ENCODE measurements at regions of chr1 and their contacts with region 1.

Region 1: DNA sequence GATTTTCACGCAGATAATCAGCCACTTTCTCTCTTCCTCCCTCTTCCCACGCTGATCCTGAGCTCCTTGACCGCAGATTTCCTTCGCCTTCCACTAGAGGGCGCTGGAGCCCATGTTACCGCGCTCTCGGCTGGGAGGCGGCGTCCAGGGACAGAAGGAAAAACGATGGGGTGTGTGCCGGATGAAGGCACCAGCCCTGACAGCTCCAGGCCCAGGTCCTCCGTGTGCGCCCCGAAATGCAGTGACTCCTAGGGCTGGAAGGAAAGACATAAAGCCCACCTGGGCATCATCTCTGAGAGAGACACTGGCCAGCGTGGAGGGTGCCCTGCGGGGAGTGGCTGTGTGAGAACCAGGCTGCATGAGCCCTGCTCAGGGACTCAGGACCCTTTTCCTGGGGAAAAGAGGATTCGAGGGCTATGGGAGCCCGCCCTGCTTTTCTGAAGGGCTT is 44.9 kb upstream of the CYP2J2 start:
- DNase-seq: peak; percentile 46 to 71
- H3K4me3 ChIP-seq: no peak overlapping the region
- H3K4me3 Mint-ChIP-seq: no peak overlapping the region
- H3K27ac Mint-ChIP-seq: no peak overlapping the region
- H3K4me1 ChIP-seq: no peaks in the 10 kb centered on the region
- H3K4me1 Mint-ChIP-seq: no peaks in the 10 kb centered on the region
- H3K27me3 ChIP-seq: no peaks in the 10 kb centered on the region
- H3K27me3 Mint-ChIP-seq: peaks cover 16% of the 10 kb centered on the region
- CTCF ChIP-seq: peak; percentile 77

Region 2: GRCh38 chr1:60126723-60127122 is 155.2 kb after region 1 on chr1:
- CTCF ChIA-PET with region 1: no interaction called
- POLR2A ChIA-PET with region 1: no interaction called
- intact Hi-C with region 1: loop called (anchors 2 kb)
- DNase-seq: peak in 1 of 2 experiments; percentile 1
- H3K4me3 ChIP-seq: no peak overlapping the region
- H3K4me3 Mint-ChIP-seq: no peak overlapping the region
- H3K27ac Mint-ChIP-seq: no peak overlapping the region
- H3K4me1 ChIP-seq: no peaks in the 10 kb centered on the region
- H3K4me1 Mint-ChIP-seq: no peaks in the 10 kb centered on the region
- H3K27me3 ChIP-seq: no peaks in the 10 kb centered on the region
- H3K27me3 Mint-ChIP-seq: no peaks in the 10 kb centered on the region
- CTCF ChIP-seq: no peak

Region 3: GRCh38 chr1:60185684-60186083 is 214.2 kb after region 1 on chr1:
- CTCF ChIA-PET with region 1: no interaction called
- POLR2A ChIA-PET with region 1: no interaction called
- intact Hi-C with region 1: no loop called
- DNase-seq: no peak
- H3K4me3 ChIP-seq: no peak overlapping the region
- H3K4me3 Mint-ChIP-seq: no peak overlapping the region
- H3K27ac Mint-ChIP-seq: no peak overlapping the region
- H3K4me1 ChIP-seq: no peaks in the 10 kb centered on the region
- H3K4me1 Mint-ChIP-seq: no peaks in the 10 kb centered on the region
- H3K27me3 ChIP-seq: no peaks in the 10 kb centered on the region
- H3K27me3 Mint-ChIP-seq: no peaks in the 10 kb centered on the region
- CTCF ChIP-seq: no peak

Region 4: GRCh38 chr1:60483509-60483908 is 512.0 kb after region 1 on chr1:
- CTCF ChIA-PET with region 1: no interaction called
- POLR2A ChIA-PET with region 1: no interaction called
- intact Hi-C with region 1: no loop called
- DNase-seq: no peak
- H3K4me3 ChIP-seq: no peak overlapping the region
- H3K4me3 Mint-ChIP-seq: no peak overlapping the region
- H3K27ac Mint-ChIP-seq: no peak overlapping the region
- H3K4me1 ChIP-seq: no peaks in the 10 kb centered on the region
- H3K4me1 Mint-ChIP-seq: no peaks in the 10 kb centered on the region
- H3K27me3 ChIP-seq: no peaks in the 10 kb centered on the region
- H3K27me3 Mint-ChIP-seq: no peaks in the 10 kb centered on the region
- CTCF ChIP-seq: no peak

Region 5: GRCh38 chr1:60535713-60536112 is 564.2 kb after region 1 on chr1:
- CTCF ChIA-PET with region 1: no interaction called
- POLR2A ChIA-PET with region 1: no interaction called
- intact Hi-C with region 1: no loop called
- DNase-seq: no peak
- H3K4me3 ChIP-seq: no peak overlapping the region
- H3K4me3 Mint-ChIP-seq: no peak overlapping the region
- H3K27ac Mint-ChIP-seq: no peak overlapping the region
- H3K4me1 ChIP-seq: no peaks in the 10 kb centered on the region
- H3K4me1 Mint-ChIP-seq: no peaks in the 10 kb centered on the region
- H3K27me3 ChIP-seq: no peaks in the 10 kb centered on the region
- H3K27me3 Mint-ChIP-seq: peaks cover 4% of the 10 kb centered on the region
- CTCF ChIP-seq: no peak